GM12878 (cell line): ENCODE measurements at regions of chr1 and their contacts with region 1.

Region 1: DNA sequence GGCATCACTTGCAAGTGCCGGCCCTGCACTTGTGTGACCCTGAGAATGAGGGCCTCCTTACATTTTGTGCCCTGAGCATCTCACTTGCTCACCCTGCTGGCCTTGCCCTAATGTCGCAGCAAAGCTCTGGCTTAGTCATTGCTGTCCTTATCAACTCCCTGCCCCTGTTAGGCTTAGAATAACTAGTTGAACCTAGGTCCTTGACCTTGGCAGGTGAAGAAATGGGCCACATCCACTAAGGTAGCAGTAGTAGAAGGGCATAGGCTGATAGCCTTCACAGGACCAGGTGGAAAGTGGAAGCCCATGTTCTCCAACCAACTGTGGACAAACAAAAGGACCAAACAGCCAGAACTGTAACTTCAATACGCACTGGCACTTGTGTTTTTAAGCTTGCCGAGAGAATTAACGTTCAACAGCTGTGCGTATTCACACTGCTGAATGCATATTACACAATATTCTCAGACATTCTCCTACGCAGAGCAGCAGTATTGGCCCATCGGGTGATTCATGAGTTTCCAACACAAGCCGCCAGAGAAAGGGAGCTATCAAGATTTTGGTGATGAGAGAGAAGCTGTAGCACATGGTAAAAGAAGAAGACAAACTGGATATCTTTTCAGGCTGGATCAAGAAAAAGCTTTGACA is 27.7 kb upstream of the PTGFRN start:
- DNase-seq: no peak
- ATAC-seq: peak; percentile 69
- H3K4me3 ChIP-seq: no peak overlapping the region
- H3K27ac ChIP-seq: no peak overlapping the region
- H3K4me1 ChIP-seq: peaks cover 14% of the 10 kb centered on the region; the same call in 1 of the 2 replicates
- H3K27me3 ChIP-seq: no peaks in the 10 kb centered on the region
- CTCF ChIP-seq: peak; percentile 45 to 73 (median 65)
- EP300 ChIP-seq: no peak
- POLR2A ChIP-seq: no peak
- RAD21 ChIP-seq: peak; percentile 79

Region 2: DNA sequence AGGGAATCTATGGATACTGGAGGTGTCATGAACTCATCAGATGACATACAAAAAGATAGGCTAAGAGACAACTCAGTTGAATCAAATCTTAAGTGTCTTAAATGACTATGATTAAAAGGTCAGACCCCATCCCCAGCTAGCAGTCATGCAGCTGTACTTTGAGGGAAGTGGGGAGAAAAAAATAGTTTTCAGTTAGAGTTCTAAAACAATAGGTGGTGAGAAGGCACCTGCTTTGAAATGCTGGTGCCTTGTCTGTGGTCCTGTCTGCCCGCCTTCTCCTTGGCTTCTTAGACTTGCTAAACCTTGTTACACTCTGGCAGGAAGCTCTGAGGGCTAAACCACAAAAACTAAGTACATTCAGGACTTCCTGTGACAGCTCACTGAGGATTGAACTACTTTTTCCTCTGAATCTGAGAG is 112.4 kb before region 1 on chr1:
- CTCF ChIA-PET with region 1: interaction called, 14 read pairs
- POLR2A ChIA-PET with region 1: no interaction called
- RAD21 ChIA-PET with region 1: interaction called, 21 read pairs
- SMC1A ChIA-PET with region 1: interaction called, 31 read pairs
- in situ Hi-C with region 1: no loop called
- intact Hi-C with region 1: no loop called
- DNase-seq: peak; percentile 68
- ATAC-seq: peak; percentile 80
- H3K4me3 ChIP-seq: peak overlapping the region; percentile 6; the same call in 1 of the 2 replicates
- H3K27ac ChIP-seq: peak overlapping the region; percentile 40; the same call in 1 of the 2 replicates
- H3K4me1 ChIP-seq: peaks cover 21% of the 10 kb centered on the region
- H3K27me3 ChIP-seq: no peaks in the 10 kb centered on the region
- CTCF ChIP-seq: no peak
- EP300 ChIP-seq: 0 out of 4 replicates have a peak, but pooled peaks of 1 of the 2 experiments have one; percentile 39
- POLR2A ChIP-seq: no peak
- RAD21 ChIP-seq: no peak; the same call in 1 of the 2 replicates

Region 3: DNA sequence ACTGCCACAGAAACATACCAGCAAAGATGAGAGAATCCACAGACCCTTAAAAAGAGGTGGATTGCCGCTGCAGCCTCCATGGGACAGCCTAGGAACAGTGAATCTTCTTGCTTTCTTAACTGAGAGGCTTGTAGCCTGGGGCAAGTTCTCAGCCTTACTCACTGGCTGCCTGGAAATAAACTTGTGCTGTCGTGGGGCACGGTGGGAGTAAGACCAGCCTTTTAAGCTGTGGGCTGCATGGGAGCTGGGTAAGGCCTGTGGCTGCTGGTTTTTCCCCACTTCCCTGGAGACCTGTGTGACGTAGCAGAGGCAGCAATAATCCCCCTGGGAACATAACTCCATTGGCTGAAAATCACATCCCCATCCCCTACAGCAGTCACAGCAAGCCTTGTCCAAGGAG is 97.0 kb before region 1 on chr1:
- CTCF ChIA-PET with region 1: no interaction called
- POLR2A ChIA-PET with region 1: no interaction called
- RAD21 ChIA-PET with region 1: no interaction called
- SMC1A ChIA-PET with region 1: no interaction called
- in situ Hi-C with region 1: no loop called
- intact Hi-C with region 1: no loop called
- DNase-seq: no peak
- ATAC-seq: peak; percentile 70
- H3K4me3 ChIP-seq: no peak overlapping the region
- H3K27ac ChIP-seq: no peak overlapping the region
- H3K4me1 ChIP-seq: no peaks in the 10 kb centered on the region
- H3K27me3 ChIP-seq: no peaks in the 10 kb centered on the region
- CTCF ChIP-seq: no peak
- EP300 ChIP-seq: no peak
- POLR2A ChIP-seq: no peak
- RAD21 ChIP-seq: no peak

Region 4: DNA sequence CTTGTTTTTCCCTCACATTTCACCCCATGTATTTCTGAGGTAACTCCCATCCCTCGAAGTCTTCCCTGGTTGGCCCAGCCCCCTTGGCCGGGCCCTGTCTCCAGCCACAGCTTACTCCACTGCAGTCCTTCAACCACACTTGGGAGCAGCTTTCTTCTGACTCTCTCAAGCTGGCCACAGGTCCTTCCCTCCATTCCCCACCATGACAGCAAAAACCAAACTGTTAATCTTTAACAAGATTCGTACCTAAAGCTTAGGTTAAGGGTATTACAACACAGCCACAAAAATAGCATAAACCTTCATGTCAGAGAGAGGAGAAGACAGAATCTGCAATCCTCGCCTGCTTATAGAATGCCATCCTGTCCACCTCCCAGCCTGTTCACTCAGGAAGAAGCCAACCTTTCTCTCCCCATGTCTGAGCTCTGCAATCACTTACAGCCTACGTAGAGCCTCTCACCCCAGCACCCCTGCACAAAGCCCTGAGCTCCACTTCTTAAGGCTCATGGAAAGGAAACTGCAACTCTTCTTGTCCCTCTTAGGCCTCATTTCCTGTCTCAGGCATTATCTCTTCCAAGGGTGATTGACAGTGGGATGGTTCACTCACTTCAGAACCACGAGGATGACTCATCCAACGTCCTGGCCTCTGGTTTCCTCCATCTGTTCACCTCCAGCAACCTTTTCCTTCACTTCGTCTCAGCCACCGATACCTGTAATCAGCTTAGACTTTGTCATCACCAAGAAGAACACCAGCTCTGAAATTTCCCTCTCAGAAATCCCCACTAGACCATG is 55.0 kb before region 1 on chr1:
- CTCF ChIA-PET with region 1: interaction called, 68 read pairs
- POLR2A ChIA-PET with region 1: interaction called, 12 read pairs
- RAD21 ChIA-PET with region 1: interaction called, 96 read pairs
- SMC1A ChIA-PET with region 1: interaction called, 46 read pairs
- in situ Hi-C with region 1: no loop called
- intact Hi-C with region 1: loop called (anchors 1 kb)
- DNase-seq: peak; percentile 97
- ATAC-seq: peak; percentile 87
- H3K4me3 ChIP-seq: no peak overlapping the region
- H3K27ac ChIP-seq: peak overlapping the region; percentile 60
- H3K4me1 ChIP-seq: peaks cover 23% of the 10 kb centered on the region
- H3K27me3 ChIP-seq: no peaks in the 10 kb centered on the region; a peak in 1 of 4 replicates
- CTCF ChIP-seq: no peak
- EP300 ChIP-seq: peak; percentile 17 to 90; a peak in 2 of 4 replicates
- POLR2A ChIP-seq: no peak
- RAD21 ChIP-seq: 0 out of 2 replicates have a peak, but pooled peaks have one; percentile 10

Region 5: DNA sequence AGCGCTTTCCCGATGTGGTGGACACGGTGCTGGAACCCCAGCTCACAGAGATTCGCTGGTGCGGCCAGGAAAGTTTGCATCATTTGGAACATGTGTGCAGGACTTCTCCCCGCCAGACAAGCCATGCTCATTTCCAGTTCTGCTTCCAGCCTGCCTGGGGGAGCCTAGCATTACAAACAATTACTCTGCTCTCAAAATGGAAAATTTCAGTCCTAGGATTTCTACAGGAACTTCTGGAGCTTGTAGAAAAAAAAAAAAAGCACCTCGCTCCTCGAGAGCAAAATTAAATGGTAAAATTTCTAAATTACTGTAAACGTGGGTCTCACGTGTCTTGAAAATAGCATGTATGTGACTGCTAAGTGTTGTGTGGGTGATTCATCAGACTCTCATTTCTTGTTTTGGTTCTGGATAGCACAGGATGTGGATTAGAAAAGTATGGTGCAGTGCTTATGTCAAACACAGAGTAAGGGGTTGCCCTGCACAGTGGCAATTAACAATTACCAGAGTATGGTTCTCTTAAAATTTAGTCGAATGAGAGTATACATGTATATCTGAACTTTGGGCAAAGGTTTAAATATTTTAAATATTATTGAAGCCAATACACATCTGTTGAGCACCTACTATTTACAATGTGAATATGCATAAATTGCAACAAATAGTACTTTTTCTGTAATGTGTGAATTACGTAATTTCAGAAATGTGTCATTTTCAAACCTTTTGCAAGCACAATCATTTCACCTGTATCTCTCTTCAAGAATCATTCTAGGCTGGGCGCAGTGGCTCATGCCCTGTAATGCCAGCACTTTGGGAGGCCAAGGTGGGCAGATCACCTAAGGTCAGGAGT is 34.1 kb before region 1 on chr1:
- CTCF ChIA-PET with region 1: interaction called, 10 read pairs
- POLR2A ChIA-PET with region 1: interaction called, 6 read pairs
- RAD21 ChIA-PET with region 1: interaction called, 30 read pairs
- SMC1A ChIA-PET with region 1: interaction called, 122 read pairs
- in situ Hi-C with region 1: no loop called
- intact Hi-C with region 1: no loop called
- DNase-seq: no peak
- ATAC-seq: peak; percentile 93
- H3K4me3 ChIP-seq: no peak overlapping the region
- H3K27ac ChIP-seq: no peak overlapping the region
- H3K4me1 ChIP-seq: peaks cover 6% of the 10 kb centered on the region; the same call in 1 of the 2 replicates
- H3K27me3 ChIP-seq: no peaks in the 10 kb centered on the region
- CTCF ChIP-seq: no peak
- EP300 ChIP-seq: no peak; a peak in 2 of 4 replicates
- POLR2A ChIP-seq: no peak
- RAD21 ChIP-seq: no peak

Region 6: GRCh38 chr1:116910379-116911187 is 28.6 kb after region 1 on chr1:
- CTCF ChIA-PET with region 1: interaction called, 10 read pairs
- POLR2A ChIA-PET with region 1: interaction called, 7 read pairs
- RAD21 ChIA-PET with region 1: interaction called, 9 read pairs
- SMC1A ChIA-PET with region 1: interaction called, 12 read pairs
- in situ Hi-C with region 1: no loop called
- intact Hi-C with region 1: no loop called
- DNase-seq: no peak
- ATAC-seq: peak; percentile 59
- H3K4me3 ChIP-seq: no peak overlapping the region
- H3K27ac ChIP-seq: no peak overlapping the region
- H3K4me1 ChIP-seq: no peaks in the 10 kb centered on the region
- H3K27me3 ChIP-seq: peaks cover 0 to 13% of the 10 kb centered on the region in 2 experiments; a peak in 2 of 4 replicates
- CTCF ChIP-seq: no peak
- EP300 ChIP-seq: no peak
- POLR2A ChIP-seq: no peak
- RAD21 ChIP-seq: no peak

Region 7: DNA sequence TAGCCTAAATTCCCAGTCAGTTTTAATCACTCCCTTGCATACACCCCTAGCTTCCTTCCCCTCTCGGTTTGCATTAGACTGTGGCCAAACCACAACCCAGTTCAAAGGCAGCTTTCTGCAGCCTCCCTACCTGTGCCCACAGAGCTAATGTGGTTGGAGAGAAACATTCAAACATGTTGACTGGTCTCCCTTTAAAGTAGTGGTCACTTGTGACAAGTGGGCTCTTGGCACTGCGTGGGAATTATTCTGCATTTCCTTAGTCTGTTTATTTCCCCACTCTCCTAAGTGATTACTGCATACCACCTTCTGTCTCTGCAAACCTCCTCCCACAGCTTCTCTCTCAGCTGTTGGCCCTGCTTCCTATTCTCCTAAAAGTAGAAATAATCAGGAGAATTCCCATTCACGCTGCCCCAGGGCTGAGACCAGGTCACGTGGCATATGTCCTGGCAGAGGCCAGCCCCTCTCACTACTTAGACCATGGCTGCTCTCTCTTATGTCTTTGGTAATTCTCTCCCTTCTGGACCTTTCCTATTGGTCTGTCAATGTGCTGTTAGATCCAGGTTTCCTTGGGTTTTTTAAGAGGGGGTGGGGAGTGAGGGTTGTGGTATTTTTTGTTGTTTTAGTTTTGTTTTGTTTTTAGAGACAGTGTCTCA is 81.1 kb after region 1 on chr1:
- CTCF ChIA-PET with region 1: no interaction called
- POLR2A ChIA-PET with region 1: no interaction called
- RAD21 ChIA-PET with region 1: no interaction called
- SMC1A ChIA-PET with region 1: no interaction called
- in situ Hi-C with region 1: no loop called
- intact Hi-C with region 1: no loop called
- DNase-seq: no peak
- ATAC-seq: peak; percentile 66
- H3K4me3 ChIP-seq: no peak overlapping the region
- H3K27ac ChIP-seq: no peak overlapping the region
- H3K4me1 ChIP-seq: no peaks in the 10 kb centered on the region
- H3K27me3 ChIP-seq: 0 out of 4 replicates have a peak, but pooled peaks cover 0 to 3% of the 10 kb centered on the region in 2 experiments
- CTCF ChIP-seq: no peak
- EP300 ChIP-seq: no peak
- POLR2A ChIP-seq: no peak
- RAD21 ChIP-seq: no peak

Region 8: GRCh38 chr1:116981521-116982037 is 99.6 kb after region 1 on chr1:
- CTCF ChIA-PET with region 1: no interaction called
- POLR2A ChIA-PET with region 1: no interaction called
- RAD21 ChIA-PET with region 1: no interaction called
- SMC1A ChIA-PET with region 1: no interaction called
- in situ Hi-C with region 1: no loop called
- intact Hi-C with region 1: no loop called
- DNase-seq: no peak
- ATAC-seq: no peak
- H3K4me3 ChIP-seq: no peak overlapping the region
- H3K27ac ChIP-seq: no peak overlapping the region
- H3K4me1 ChIP-seq: no peaks in the 10 kb centered on the region
- H3K27me3 ChIP-seq: peaks cover 0 to 1% of the 10 kb centered on the region in 2 experiments; a peak in 2 of 4 replicates
- CTCF ChIP-seq: no peak
- EP300 ChIP-seq: no peak
- POLR2A ChIP-seq: no peak
- RAD21 ChIP-seq: no peak

Region 9: GRCh38 chr1:117051224-117052064 is 169.4 kb after region 1 on chr1:
- CTCF ChIA-PET with region 1: interaction called, 9 read pairs
- POLR2A ChIA-PET with region 1: interaction called, 8 read pairs
- RAD21 ChIA-PET with region 1: interaction called, 21 read pairs
- SMC1A ChIA-PET with region 1: interaction called, 10 read pairs
- in situ Hi-C with region 1: no loop called
- intact Hi-C with region 1: loop called (anchors 2 kb)
- DNase-seq: peak; percentile 34
- ATAC-seq: peak; percentile 93
- H3K4me3 ChIP-seq: peak overlapping the region; percentile 61; the same call in 1 of the 2 replicates
- H3K27ac ChIP-seq: peak overlapping the region; percentile 89
- H3K4me1 ChIP-seq: peaks cover 13% of the 10 kb centered on the region
- H3K27me3 ChIP-seq: no peaks in the 10 kb centered on the region
- CTCF ChIP-seq: no peak
- EP300 ChIP-seq: no peak; a peak in 1 of 4 replicates
- POLR2A ChIP-seq: peak; percentile 55
- RAD21 ChIP-seq: peak; percentile 2; the same call in 1 of the 2 replicates

Region 10: GRCh38 chr1:118618618-118619340 is 1736.8 kb after region 1 on chr1:
- CTCF ChIA-PET with region 1: no interaction called
- POLR2A ChIA-PET with region 1: no interaction called
- RAD21 ChIA-PET with region 1: no interaction called
- SMC1A ChIA-PET with region 1: no interaction called
- in situ Hi-C with region 1: no loop called
- intact Hi-C with region 1: no loop called
- DNase-seq: no peak
- ATAC-seq: no peak
- H3K4me3 ChIP-seq: no peak overlapping the region
- H3K27ac ChIP-seq: no peak overlapping the region
- H3K4me1 ChIP-seq: no peaks in the 10 kb centered on the region
- H3K27me3 ChIP-seq: no peaks in the 10 kb centered on the region
- CTCF ChIP-seq: no peak
- EP300 ChIP-seq: no peak
- POLR2A ChIP-seq: no peak
- RAD21 ChIP-seq: no peak